ENCODE measurements at regions of chr7 and their contacts with region 1.

Region 1: GRCh38 chr7:5450549-5451372 is 27.1 kb upstream of the TNRC18 start:
- DNase-seq: peak; percentile 44 to 82 (median 79)
- ATAC-seq: peak; percentile 75 to 76
- H3K4me3 ChIP-seq: no peak overlapping the region
- H3K27ac ChIP-seq: no peak overlapping the region
- H3K4me1 ChIP-seq: no peaks in the 10 kb centered on the region
- H3K27me3 ChIP-seq: no peaks in the 10 kb centered on the region

Region 2: DNA sequence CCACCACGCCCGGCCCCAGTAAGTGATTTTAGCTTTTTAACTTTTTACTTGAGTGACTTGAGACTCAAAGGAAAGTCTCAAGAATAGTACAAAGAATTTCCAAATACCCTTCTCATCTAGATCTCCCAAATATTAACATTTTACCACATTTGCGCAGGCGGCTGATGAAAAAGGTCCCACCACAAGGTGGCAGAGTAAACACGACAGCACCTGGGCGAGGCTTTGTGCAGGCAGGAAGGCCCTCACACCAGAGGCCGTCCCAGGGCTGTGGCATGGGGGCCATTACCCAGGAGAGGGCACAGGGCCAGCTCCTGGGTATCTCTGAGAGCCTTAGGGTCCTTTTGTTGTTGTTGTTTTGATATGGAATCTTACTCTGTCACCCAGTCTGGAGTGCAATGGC is 310.8 kb before region 1 on chr7:
- intact Hi-C with region 1: no loop called
- DNase-seq: peak in 1 of 3 donors; percentile 63
- ATAC-seq: peak in 1 of 2 donors; percentile 51
- H3K4me3 ChIP-seq: no peak overlapping the region
- H3K27ac ChIP-seq: no peak overlapping the region
- H3K4me1 ChIP-seq: no peaks in the 10 kb centered on the region
- H3K27me3 ChIP-seq: no peaks in the 10 kb centered on the region

Region 3: GRCh38 chr7:5231811-5232484 is 218.8 kb before region 1 on chr7:
- intact Hi-C with region 1: loop called in 1 of 4 experiments (anchors 10 kb)
- DNase-seq: peak in 2 of 3 donors; percentile 57 to 60
- ATAC-seq: peak in 1 of 2 donors; percentile 31
- H3K4me3 ChIP-seq: no peak overlapping the region
- H3K27ac ChIP-seq: no peak overlapping the region
- H3K4me1 ChIP-seq: no peaks in the 10 kb centered on the region
- H3K27me3 ChIP-seq: no peaks in the 10 kb centered on the region

Region 4: DNA sequence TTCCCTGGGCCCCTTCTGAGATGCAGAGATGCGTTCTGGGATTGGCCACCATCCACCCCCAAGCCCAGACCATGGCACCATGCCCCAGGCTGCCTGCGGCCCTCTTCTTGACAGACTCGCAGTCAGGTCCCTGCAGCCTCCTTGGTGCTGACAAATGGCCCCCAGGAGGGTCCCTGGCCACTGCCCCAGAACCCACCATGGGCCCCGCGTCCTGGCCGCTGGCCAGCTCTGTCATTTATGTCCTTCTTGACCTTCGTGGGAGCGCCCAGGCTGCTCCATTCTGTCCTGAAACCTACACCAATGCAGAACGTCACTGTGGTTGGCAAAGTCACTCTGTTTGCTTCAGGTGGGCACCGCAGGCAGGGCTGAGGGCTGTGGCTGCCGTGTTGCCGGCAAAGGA is 207.5 kb before region 1 on chr7:
- intact Hi-C with region 1: loop called (anchors 5 to 10 kb)
- DNase-seq: peak in 1 of 3 donors; percentile 52
- ATAC-seq: no peak
- H3K4me3 ChIP-seq: no peak overlapping the region
- H3K27ac ChIP-seq: no peak overlapping the region
- H3K4me1 ChIP-seq: no peaks in the 10 kb centered on the region
- H3K27me3 ChIP-seq: no peaks in the 10 kb centered on the region

Region 5: GRCh38 chr7:5248201-5248885 is 202.4 kb before region 1 on chr7:
- intact Hi-C with region 1: loop called in 3 of 4 experiments (anchors 5 to 10 kb)
- DNase-seq: peak; percentile 75 to 92 (median 91)
- ATAC-seq: peak; percentile 84 to 89
- H3K4me3 ChIP-seq: no peak overlapping the region
- H3K27ac ChIP-seq: no peak overlapping the region
- H3K4me1 ChIP-seq: no peaks in the 10 kb centered on the region
- H3K27me3 ChIP-seq: no peaks in the 10 kb centered on the region

Region 6: GRCh38 chr7:5363729-5364128 is 87.0 kb before region 1 on chr7:
- intact Hi-C with region 1: loop called in 3 of 4 experiments (anchors 1 to 10 kb)
- DNase-seq: peak in 1 of 3 donors; percentile 3
- ATAC-seq: no peak
- H3K4me3 ChIP-seq: no peak overlapping the region
- H3K27ac ChIP-seq: no peak overlapping the region
- H3K4me1 ChIP-seq: no peaks in the 10 kb centered on the region
- H3K27me3 ChIP-seq: no peaks in the 10 kb centered on the region

Measured in right cardiac atrium (tissue), 5 donors.